ENCODE measurements at regions of chr1 and their contacts with region 1.

Region 1: DNA sequence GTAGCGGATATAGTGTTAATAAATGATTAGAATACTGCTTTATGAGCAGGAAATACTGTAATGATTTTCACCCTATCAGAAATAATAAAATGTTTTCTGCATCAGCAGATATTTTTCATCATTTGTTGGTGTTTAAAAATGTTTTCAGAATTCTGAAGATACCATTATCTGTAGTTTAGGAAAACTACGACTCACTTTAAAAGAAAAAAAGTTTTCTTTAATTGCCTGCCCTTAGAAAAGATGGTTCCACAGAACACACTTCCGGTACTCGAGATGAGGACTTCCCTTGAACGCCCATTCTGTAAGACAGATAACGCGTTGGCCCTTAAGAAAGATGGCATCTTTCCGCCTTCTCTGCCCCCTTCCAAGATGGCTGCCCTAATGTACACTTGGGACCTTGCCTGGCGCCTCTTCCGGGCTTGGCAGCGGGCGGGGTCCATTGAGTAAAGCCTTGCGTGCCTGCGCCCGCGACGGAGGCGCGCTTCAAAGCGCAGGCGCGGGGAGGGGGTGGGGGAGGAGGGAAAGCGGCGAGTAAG is at the start of gene SZRD1:
- DNase-seq: peak; percentile 99
- H3K4me3 ChIP-seq: peak within 1 kb of the TSS; percentile 63 to 73 (median 70)
- H3K27ac ChIP-seq: peak within 1 kb of the TSS; percentile 85
- H3K4me1 ChIP-seq: peaks cover 16% of the 10 kb centered on the region
- H3K27me3 ChIP-seq: no peaks in the 10 kb centered on the region
- CTCF ChIP-seq: no peak
- total RNA-seq, gene SZRD1: 46.0 to 126 TPM

Region 2: GRCh38 chr1:16067127-16067768 is 299.5 kb before region 1 on chr1:
- CTCF ChIA-PET with region 1: no interaction called
- dilution Hi-C with region 1: loop called (anchors 5 kb)
- in situ Hi-C with region 1: no loop called
- intact Hi-C with region 1: no loop called
- DNase-seq: peak; percentile 46
- H3K4me3 ChIP-seq: no peak overlapping the region
- H3K27ac ChIP-seq: no peak overlapping the region
- H3K4me1 ChIP-seq: no peaks in the 10 kb centered on the region
- H3K27me3 ChIP-seq: no peaks in the 10 kb centered on the region
- CTCF ChIP-seq: no peak

Region 3: DNA sequence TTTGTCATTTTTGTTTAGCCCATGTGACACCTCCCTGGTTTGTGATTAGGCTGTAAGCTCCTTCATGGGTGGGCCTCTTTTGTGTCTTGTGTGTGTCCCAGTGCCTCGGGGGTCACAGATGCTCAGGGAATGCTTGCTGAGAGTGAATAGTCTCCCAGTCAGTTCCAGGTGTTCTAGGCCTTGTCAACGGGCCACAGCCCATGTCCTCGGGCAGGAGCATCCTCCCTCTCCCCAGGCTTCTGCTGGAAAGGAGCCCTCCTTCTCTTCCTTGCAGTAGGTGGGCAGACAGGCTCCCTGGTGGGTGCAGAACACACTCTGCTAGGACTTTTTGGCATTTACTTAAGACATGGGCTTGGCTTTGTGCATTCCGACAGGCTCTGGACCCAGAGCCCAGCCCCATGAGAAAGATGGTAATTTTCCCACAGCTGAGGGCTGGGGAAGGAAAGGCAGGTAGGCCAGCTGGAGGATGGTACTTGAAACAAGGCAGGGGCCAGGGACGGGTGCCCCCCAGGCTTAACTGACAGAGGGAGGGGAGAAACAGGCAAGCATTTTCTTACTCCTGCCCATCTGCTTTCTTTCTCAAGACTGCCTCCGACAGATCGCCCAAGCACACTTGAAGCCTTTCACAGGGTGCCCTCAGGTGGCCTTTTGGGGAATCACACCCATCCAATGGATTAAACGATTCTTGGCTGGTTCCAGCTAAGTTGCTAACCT is 122.7 kb before region 1 on chr1:
- CTCF ChIA-PET with region 1: interaction called, 4 read pairs
- dilution Hi-C with region 1: no loop called
- in situ Hi-C with region 1: no loop called
- intact Hi-C with region 1: loop called (anchors 1 kb)
- DNase-seq: peak; percentile 66
- H3K4me3 ChIP-seq: no peak overlapping the region
- H3K27ac ChIP-seq: no peak overlapping the region
- H3K4me1 ChIP-seq: peaks cover 12% of the 10 kb centered on the region
- H3K27me3 ChIP-seq: no peaks in the 10 kb centered on the region
- CTCF ChIP-seq: peak; percentile 86

Region 4: GRCh38 chr1:16324456-16324890 is 42.3 kb before region 1 on chr1:
- CTCF ChIA-PET with region 1: no interaction called
- dilution Hi-C with region 1: no loop called
- in situ Hi-C with region 1: no loop called
- intact Hi-C with region 1: loop called (anchors 1 kb)
- DNase-seq: peak; percentile 68
- H3K4me3 ChIP-seq: no peak overlapping the region
- H3K27ac ChIP-seq: no peak overlapping the region
- H3K4me1 ChIP-seq: peaks cover 22% of the 10 kb centered on the region
- H3K27me3 ChIP-seq: no peaks in the 10 kb centered on the region
- CTCF ChIP-seq: no peak

Region 5: GRCh38 chr1:16386454-16387113 is 19.8 kb after region 1 on chr1:
- CTCF ChIA-PET with region 1: no interaction called
- dilution Hi-C with region 1: no loop called
- in situ Hi-C with region 1: no loop called
- intact Hi-C with region 1: loop called (anchors 1 kb)
- DNase-seq: peak; percentile 80
- H3K4me3 ChIP-seq: peak overlapping the region in 2 of 3 experiments; percentile 28 to 47
- H3K27ac ChIP-seq: no peak overlapping the region
- H3K4me1 ChIP-seq: peaks cover 28% of the 10 kb centered on the region
- H3K27me3 ChIP-seq: no peaks in the 10 kb centered on the region
- CTCF ChIP-seq: no peak

Region 6: DNA sequence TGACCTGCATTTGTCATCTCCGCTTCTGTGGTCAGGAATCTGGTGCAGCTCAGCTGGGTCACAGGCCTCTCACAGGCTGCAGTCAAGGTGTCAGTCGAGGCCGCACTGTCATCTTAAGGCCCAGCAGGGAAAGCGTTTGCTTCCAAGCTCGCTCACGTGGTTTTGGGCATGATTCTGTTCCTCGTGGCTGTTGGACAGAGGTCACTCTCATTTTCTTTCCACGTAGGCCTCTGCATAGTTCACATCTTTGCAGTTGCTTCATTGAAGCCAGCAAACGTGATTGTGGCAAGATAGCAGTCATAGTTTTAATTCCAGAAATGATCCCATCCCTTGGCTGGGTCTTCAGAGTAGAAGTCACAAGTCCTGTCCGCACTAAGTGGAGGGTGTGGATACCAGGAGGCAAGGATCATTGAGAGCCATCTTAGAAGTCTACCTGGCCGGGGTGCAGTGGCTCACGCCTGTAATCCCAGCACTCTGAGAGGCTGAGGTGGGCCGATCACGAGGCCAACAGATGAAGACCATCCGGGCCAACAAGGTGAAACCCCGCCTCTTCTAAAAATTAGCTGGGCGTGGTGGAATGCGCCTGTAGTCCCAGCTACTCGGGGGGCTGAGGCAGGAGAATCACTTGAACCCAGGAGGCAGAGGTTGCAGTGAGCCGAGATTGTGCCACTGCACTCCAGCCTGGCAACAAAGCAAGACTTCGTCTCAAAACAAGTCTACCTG is 98.3 kb after region 1 on chr1:
- CTCF ChIA-PET with region 1: no interaction called
- dilution Hi-C with region 1: no loop called
- in situ Hi-C with region 1: no loop called
- intact Hi-C with region 1: no loop called
- DNase-seq: no peak
- H3K4me3 ChIP-seq: no peak overlapping the region
- H3K27ac ChIP-seq: no peak overlapping the region
- H3K4me1 ChIP-seq: no peaks in the 10 kb centered on the region
- H3K27me3 ChIP-seq: no peaks in the 10 kb centered on the region
- CTCF ChIP-seq: no peak

Region 7: DNA sequence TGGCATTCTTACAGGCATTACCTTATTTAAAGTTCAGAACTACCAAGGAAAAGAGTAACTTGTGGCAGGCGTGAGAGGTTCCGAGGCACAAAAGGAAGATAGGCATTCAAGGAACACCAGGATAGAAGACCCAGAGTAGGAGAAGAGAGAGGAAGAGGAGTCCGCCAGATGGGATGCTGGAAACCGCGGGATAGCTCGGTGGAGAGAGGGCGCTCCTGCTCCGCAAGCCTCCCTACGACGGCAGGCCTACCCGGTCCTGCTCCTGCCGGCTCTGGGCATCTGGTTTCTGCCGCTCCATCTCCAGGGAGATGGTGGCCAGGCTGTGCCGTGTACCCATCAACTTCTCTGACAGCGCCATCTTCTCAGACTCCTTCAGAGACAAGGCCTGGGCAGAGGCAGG is 251.9 kb after region 1 on chr1:
- CTCF ChIA-PET with region 1: no interaction called
- dilution Hi-C with region 1: no loop called
- in situ Hi-C with region 1: no loop called
- intact Hi-C with region 1: loop called (anchors 5 kb)
- DNase-seq: no peak
- H3K4me3 ChIP-seq: no peak overlapping the region
- H3K27ac ChIP-seq: no peak overlapping the region
- H3K4me1 ChIP-seq: peaks cover 26% of the 10 kb centered on the region
- H3K27me3 ChIP-seq: no peaks in the 10 kb centered on the region
- CTCF ChIP-seq: no peak